ENCODE measurements at regions of chr2 and their contacts with region 1.

Region 1: GRCh38 chr2:62456721-62457539 is 49.1 kb downstream of the TMEM17 start:
- DNase-seq: peak; percentile 76 to 91 (median 90)
- ATAC-seq: peak; percentile 94 to 96
- H3K4me3 ChIP-seq: peak overlapping the region; percentile 39
- H3K27ac ChIP-seq: peak overlapping the region; percentile 1
- H3K4me1 ChIP-seq: no peaks in the 10 kb centered on the region
- H3K27me3 ChIP-seq: no peaks in the 10 kb centered on the region

Region 2: DNA sequence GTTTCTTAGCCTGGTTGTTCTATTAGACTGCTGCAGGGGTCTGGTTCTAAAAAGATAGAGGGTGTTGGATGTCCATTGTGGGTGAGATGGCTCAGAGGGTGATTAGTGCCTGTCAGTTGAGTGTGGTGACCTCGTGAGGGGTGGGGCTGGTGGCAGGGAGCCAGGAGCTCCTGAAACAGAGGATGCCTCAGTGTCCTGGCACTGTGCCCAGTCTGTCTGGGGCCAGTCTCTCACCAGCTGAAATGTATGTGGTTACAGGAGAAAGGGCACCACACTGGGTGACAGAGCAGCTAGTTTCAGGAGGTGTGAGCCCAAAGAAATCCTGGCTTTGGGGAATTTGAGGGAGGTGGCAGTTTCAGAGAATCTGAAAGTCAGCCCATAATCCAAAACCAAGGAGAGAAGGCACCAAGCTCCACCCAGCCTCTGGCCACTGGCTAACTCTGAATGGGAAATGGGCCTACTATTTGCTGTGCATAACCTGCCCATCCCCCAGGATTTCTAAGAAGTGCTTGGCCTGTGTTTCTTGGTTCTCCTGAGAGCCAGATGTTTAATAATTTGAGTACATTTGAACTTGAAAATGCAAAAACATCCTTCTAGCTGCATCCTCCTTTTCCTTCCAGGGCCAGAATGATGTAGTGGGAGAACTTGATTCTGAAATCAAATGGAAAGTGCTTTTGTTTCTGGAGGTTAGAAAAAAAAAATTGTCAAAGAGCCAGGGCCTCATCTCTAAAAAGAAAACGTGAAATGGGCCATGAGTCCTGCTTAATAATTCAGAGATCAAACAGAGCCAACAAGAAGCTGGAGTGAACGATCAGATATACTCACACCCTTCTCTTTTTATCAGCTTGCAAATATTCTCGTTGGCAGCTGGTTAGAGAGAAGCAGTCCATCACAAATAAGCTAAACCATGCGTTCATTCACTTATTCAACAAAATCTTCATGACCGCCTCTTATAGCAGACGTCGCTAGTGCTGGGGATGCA is 168.7 kb before region 1 on chr2:
- intact Hi-C with region 1: no loop called
- DNase-seq: peak; percentile 82 to 93 (median 88)
- ATAC-seq: peak; percentile 79 to 85
- H3K4me3 ChIP-seq: no peak overlapping the region
- H3K27ac ChIP-seq: peak overlapping the region; percentile 21
- H3K4me1 ChIP-seq: peaks cover 11% of the 10 kb centered on the region
- H3K27me3 ChIP-seq: no peaks in the 10 kb centered on the region

Region 3: DNA sequence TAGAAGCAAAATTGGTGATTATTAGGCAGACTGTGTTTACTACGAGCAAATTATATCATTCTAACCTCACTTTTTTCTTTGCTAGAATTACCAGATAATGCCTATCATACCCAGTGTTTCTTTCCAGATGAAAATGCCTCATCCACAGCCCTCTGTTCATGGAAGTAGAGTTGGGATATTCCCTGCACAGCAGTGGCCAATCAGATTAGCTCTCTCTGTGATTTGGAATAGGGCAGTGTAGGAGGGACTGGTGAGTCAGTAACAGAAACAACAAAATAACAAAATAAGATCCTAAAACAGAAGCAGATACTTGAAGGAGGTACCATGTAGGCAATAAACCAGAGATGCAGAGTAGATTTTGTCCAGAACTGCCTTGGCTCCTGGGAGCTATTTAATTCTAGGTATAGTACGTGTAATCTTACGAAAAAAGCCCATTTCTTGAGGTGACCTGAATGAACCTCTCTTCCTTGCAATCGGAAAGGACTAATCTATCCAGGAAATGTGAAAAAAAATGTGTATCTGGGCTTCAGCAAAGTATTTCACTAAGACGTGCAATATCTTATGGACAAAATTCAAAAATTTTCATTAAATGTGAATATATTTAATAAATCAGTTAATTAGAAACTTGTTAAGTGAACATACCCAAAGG is 67.5 kb after region 1 on chr2:
- intact Hi-C with region 1: no loop called
- DNase-seq: no peak
- ATAC-seq: peak; percentile 85 to 95
- H3K4me3 ChIP-seq: no peak overlapping the region
- H3K27ac ChIP-seq: no peak overlapping the region
- H3K4me1 ChIP-seq: no peaks in the 10 kb centered on the region
- H3K27me3 ChIP-seq: no peaks in the 10 kb centered on the region

Region 4: DNA sequence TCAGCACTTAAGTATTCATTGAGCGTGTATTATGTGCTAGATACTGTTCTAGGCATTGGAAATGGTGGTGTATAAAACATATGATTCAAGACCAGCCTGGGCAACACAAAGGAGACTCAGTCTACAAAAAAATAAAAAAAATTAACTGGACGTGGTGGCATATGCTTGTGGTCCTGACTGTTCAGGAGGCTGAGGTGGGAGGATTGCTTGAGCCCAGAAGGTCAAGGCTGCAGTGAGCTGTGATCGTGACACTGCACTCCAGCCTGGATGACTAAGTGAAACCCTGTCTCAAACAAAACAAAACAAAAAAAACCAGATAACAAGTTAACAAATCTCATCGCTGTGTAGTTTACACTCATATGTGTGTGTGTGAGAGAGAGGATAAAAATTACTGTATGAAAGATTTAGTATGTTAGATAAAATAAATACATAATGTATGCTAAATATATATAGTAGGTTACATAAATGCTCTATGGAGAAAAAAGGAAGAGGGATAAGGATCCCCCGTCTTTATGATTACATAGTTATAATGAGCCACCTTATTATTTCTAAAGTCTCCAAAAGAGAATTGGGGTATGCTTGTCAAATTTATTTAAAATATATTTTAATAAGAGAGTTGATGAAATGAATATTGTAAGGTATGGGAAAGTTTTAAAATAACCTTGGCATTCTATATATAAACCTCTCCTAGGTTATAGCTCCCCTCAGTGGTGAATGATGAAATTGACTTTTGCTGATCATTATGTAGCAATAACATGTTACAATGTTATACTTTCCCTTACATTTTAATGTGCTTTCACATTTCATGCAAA is 317.8 kb after region 1 on chr2:
- intact Hi-C with region 1: loop called (anchors 2 to 5 kb)
- DNase-seq: peak in 1 of 3 donors; percentile 21
- ATAC-seq: peak; percentile 62 to 71
- H3K4me3 ChIP-seq: no peak overlapping the region
- H3K27ac ChIP-seq: no peak overlapping the region
- H3K4me1 ChIP-seq: no peaks in the 10 kb centered on the region
- H3K27me3 ChIP-seq: no peaks in the 10 kb centered on the region

Measured in right cardiac atrium (tissue), 5 donors.